ENCODE measurements at regions of chr5 and their contacts with region 1.

Region 1: DNA sequence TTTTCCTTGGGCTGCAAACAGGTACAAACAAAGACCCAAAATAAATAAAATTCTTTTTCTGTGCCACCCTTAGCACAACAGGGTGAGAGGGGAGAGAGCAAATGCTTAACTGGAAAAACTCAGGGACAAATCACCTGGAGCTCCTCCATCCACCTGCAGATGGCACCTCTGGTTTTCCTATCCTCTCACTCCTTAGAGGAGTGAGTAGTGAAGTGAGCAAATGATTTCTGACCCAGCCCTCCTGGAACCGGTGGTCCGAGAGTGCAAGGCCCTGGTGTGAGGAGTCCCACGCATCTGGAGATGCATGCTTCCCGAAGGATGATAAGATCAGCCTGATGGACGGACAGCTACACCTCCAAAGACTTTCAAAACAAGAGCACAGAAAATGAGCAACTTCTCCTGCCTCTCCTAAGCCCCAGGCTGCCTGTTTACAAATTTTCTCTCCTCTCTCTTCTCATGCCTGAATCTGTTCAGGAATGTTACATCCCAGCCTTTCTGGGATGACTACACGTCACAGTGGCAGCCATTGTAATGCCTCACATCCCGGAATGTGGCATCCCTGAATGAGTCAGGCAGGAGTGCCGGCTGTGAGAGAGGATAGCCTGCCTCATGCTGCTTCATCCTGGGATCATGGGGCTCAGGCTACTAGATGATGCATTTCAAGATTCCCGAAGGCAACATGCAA is 86.4 kb downstream of the ADRB2 start:
- DNase-seq: no peak
- ATAC-seq: peak in 2 of 8 donors; percentile 20 to 27
- H3K4me3 ChIP-seq: no peak overlapping the region
- H3K27ac ChIP-seq: no peak overlapping the region
- H3K4me1 ChIP-seq: peaks cover 0 to 36% (median 16%) of the 10 kb centered on the region in 9 donors
- H3K27me3 ChIP-seq: no peaks in the 10 kb centered on the region
- CTCF ChIP-seq: peak in 4 of 9 donors; percentile 18 to 42 (median 35)

Region 2: GRCh38 chr5:148708854-148709253 is 204.0 kb before region 1 on chr5:
- intact Hi-C with region 1: no loop called
- DNase-seq: no peak
- ATAC-seq: no peak
- H3K4me3 ChIP-seq: no peak overlapping the region
- H3K27ac ChIP-seq: no peak overlapping the region
- H3K4me1 ChIP-seq: peaks cover 0 to 7% (median 0%) of the 10 kb centered on the region in 9 donors
- H3K27me3 ChIP-seq: no peaks in the 10 kb centered on the region
- CTCF ChIP-seq: no peak

Region 3: GRCh38 chr5:148949841-148950470 is 37.1 kb after region 1 on chr5:
- intact Hi-C with region 1: loop called in 1 of 10 experiments (anchors 5 kb)
- DNase-seq: peak; percentile 41 to 48
- ATAC-seq: peak in 7 of 8 donors; percentile 38 to 94 (median 89)
- H3K4me3 ChIP-seq: no peak overlapping the region
- H3K27ac ChIP-seq: peak overlapping the region in 4 of 10 donors; percentile 15 to 56 (median 36)
- H3K4me1 ChIP-seq: peaks cover 0 to 11% (median 0%) of the 10 kb centered on the region in 9 donors
- H3K27me3 ChIP-seq: no peaks in the 10 kb centered on the region
- CTCF ChIP-seq: no peak

Region 4: GRCh38 chr5:148960070-148960769 is 47.4 kb after region 1 on chr5:
- intact Hi-C with region 1: no loop called
- DNase-seq: no peak
- ATAC-seq: no peak
- H3K4me3 ChIP-seq: no peak overlapping the region
- H3K27ac ChIP-seq: no peak overlapping the region
- H3K4me1 ChIP-seq: peaks cover 0 to 19% (median 4%) of the 10 kb centered on the region in 9 donors
- H3K27me3 ChIP-seq: no peaks in the 10 kb centered on the region
- CTCF ChIP-seq: no peak